Activated CD8-positive, alpha-beta T cell treated with anti-CD3 and anti-CD28 coated beads for 36 hours (primary cell): ENCODE measurements at regions of chr22 and their contacts with region 1.

Region 1: DNA sequence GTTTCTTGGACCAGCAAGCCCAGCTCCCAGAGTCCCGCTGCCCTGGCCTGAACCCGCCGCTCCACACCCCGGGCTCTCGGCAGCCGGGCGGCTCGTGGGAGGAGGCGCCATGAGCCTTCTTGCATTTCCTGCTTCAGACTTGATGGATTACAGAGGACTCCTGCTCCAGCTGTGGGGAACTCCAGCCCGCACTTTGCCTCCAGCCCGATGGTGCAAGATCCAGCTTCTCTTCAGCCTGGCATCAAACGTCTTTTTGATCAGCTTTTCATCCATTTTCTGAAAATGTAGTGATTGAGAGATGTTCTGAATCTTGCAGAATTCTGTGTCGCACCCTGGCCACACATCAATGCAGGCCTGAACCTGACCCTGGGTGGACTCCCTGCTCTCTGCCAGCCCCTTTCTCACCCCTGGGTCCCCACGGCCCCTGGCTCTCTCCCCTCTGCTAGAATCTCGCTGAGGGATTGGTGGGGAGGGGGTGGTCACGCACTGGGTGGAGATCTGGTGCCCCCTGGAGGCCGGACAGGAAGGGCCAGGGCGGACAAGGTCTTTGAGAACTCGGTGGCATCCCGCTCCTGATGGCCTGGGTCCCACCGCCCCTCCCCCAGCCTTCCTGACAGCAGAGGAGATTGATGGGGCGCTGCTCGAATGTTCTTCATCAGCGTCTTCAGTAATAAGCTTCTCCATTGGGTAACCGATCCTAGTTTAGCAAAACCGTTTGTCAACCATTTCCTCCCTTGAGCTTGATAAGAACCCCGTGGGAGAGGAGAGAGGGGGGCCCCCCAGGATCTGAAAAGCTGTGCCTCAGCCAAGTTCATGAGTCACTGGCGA is 12.1 kb upstream of the NFAM1 start:
- DNase-seq: peak; percentile 89
- ATAC-seq: peak; percentile 86
- H3K4me3 Mint-ChIP-seq: peak overlapping the region; percentile 68
- H3K27ac Mint-ChIP-seq: peak overlapping the region; percentile 86
- H3K4me1 Mint-ChIP-seq: peaks cover 28% of the 10 kb centered on the region
- H3K27me3 Mint-ChIP-seq: no peaks in the 10 kb centered on the region
- CTCF ChIP-seq: peak; percentile 74

Region 2: GRCh38 chr22:42114721-42115120 is 329.6 kb before region 1 on chr22:
- CTCF ChIA-PET with region 1: interaction called, 13 read pairs
- POLR2A ChIA-PET with region 1: no interaction called
- intact Hi-C with region 1: no loop called
- DNase-seq: peak; percentile 34
- ATAC-seq: no peak
- H3K4me3 Mint-ChIP-seq: no peak overlapping the region
- H3K27ac Mint-ChIP-seq: no peak overlapping the region
- H3K4me1 Mint-ChIP-seq: peaks cover 8% of the 10 kb centered on the region
- H3K27me3 Mint-ChIP-seq: no peaks in the 10 kb centered on the region
- CTCF ChIP-seq: peak; percentile 25

Region 3: DNA sequence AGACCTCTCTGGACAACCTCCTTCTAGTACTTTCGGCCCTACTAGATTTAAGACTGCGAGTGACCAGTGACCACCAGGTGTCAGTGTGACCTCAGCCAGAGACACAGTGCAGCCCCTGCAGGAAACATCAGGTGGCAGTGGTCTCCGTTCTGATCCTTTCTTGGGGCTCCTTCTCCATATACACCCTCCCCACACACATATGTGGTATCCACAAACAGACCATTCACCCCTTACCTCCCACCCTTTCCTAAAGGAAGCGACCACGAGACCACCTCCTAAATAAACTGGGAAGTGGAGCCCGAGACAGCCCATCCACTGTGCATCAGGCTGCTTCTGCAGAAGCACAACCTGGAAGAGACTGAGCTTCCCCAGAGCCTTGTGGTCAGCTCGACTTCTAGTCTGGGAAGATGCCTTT is 275.2 kb before region 1 on chr22:
- CTCF ChIA-PET with region 1: interaction called, 16 read pairs
- POLR2A ChIA-PET with region 1: no interaction called
- intact Hi-C with region 1: no loop called
- DNase-seq: peak; percentile 89
- ATAC-seq: peak; percentile 94
- H3K4me3 Mint-ChIP-seq: no peak overlapping the region
- H3K27ac Mint-ChIP-seq: no peak overlapping the region
- H3K4me1 Mint-ChIP-seq: peaks cover 17% of the 10 kb centered on the region
- H3K27me3 Mint-ChIP-seq: no peaks in the 10 kb centered on the region
- CTCF ChIP-seq: peak; percentile 91

Region 4: DNA sequence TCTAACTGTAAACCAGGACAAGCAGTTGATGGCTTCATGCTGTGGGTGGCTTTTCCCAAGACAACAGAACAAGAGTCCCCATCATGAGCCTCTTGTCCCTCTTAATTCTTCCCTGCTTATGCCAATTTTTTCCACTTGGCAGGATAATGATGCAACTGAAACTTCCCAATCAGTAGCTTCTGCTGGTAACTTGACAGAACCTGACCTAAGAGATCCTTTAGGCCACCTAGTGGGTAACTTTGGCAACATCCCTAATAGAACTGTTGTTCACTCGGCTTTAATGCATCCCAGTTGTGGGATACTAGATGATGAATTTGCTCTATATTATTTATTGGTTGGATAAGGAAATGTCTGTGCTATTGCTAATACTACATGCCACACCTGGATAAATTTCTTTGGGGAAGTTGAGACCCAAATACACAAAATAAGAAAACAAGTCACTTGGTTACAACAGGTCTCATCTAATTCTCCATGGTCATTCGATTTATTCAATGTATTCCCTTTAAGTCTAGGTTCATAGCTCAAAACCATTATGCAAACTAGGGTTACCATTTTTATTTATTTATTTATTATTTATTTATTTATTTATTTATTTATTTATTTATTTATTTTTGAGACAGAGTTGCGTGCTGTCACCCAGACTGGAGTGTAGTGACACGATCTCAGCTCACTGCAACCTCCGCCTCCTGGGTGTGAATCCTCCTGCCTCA is 29.3 kb after region 1 on chr22:
- CTCF ChIA-PET with region 1: interaction called, 27 read pairs
- POLR2A ChIA-PET with region 1: no interaction called
- intact Hi-C with region 1: no loop called
- DNase-seq: peak; percentile 8
- ATAC-seq: no peak
- H3K4me3 Mint-ChIP-seq: no peak overlapping the region
- H3K27ac Mint-ChIP-seq: no peak overlapping the region
- H3K4me1 Mint-ChIP-seq: peaks cover 5% of the 10 kb centered on the region
- H3K27me3 Mint-ChIP-seq: no peaks in the 10 kb centered on the region
- CTCF ChIP-seq: peak; percentile 68